Common myeloid progenitor, CD34-positive (primary cell): ENCODE measurements at regions of chr14 and their contacts with region 1.

Region 1: GRCh38 chr14:70086685-70087379 is 101.9 kb downstream of the SLC8A3 start:
- DNase-seq: peak; percentile 60 to 76 (median 71)
- H3K4me3 ChIP-seq: no peak overlapping the region
- H3K27ac ChIP-seq: no peak overlapping the region
- H3K4me1 ChIP-seq: peaks cover 0 to 8% (median 2%) of the 10 kb centered on the region in 4 experiments
- H3K27me3 ChIP-seq: no peaks in the 10 kb centered on the region

Region 2: GRCh38 chr14:70045844-70046535 is 40.8 kb before region 1 on chr14:
- CTCF ChIA-PET with region 1: no interaction called
- POLR2A ChIA-PET with region 1: no interaction called
- DNase-seq: peak; percentile 14 to 59 (median 48)
- H3K4me3 ChIP-seq: no peak overlapping the region
- H3K27ac ChIP-seq: no peak overlapping the region
- H3K4me1 ChIP-seq: peaks cover 0 to 5% (median 1%) of the 10 kb centered on the region in 4 experiments
- H3K27me3 ChIP-seq: no peaks in the 10 kb centered on the region

Region 3: DNA sequence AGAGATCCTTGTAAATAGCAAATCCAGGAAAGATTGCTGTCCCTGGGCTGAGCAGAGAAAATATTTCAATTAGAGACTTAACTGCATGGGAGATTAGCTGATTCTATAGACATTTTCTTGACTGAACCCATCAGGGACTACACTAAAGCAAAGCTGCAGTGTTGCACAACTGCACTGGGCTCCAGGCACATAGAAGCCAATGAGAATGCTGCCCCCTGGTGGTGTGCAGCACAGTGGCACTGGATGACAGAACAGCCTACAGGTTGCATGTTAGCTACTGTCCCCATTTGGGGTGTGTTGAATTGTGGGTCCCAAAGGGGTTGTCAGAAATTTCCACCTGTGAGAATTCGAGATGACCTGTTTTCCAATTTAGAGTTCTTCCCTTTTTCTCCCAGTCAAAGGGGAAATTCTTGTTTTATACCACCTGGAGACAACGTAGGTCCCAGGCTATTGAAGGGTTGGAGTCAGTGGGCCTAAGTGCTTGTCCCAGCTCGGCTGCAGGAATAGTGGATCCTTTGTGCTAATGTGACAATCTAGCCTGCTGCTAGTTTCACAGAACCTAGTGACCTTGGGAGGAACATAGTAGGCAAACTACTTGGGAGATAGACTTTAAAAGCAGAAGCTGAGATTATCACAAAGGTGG is 12.8 kb before region 1 on chr14:
- CTCF ChIA-PET with region 1: interaction called, 30 read pairs
- POLR2A ChIA-PET with region 1: no interaction called
- DNase-seq: peak; percentile 46 to 74 (median 73)
- H3K4me3 ChIP-seq: no peak overlapping the region
- H3K27ac ChIP-seq: no peak overlapping the region
- H3K4me1 ChIP-seq: no peaks in the 10 kb centered on the region
- H3K27me3 ChIP-seq: no peaks in the 10 kb centered on the region

Region 4: GRCh38 chr14:70281939-70282338 is 195.1 kb after region 1 on chr14:
- CTCF ChIA-PET with region 1: no interaction called
- POLR2A ChIA-PET with region 1: no interaction called
- DNase-seq: peak in 2 of 3 donors; percentile 11 to 21
- H3K4me3 ChIP-seq: no peak overlapping the region
- H3K27ac ChIP-seq: no peak overlapping the region
- H3K4me1 ChIP-seq: no peaks in the 10 kb centered on the region
- H3K27me3 ChIP-seq: no peaks in the 10 kb centered on the region